Caco-2 (cell line): ENCODE measurements at regions of chr13 and their contacts with region 1.

Region 1: GRCh38 chr13:91154558-91155353 is 192.7 kb upstream of the MIR17HG start:
- DNase-seq: peak; percentile 36 to 50
- H3K4me3 ChIP-seq: peak overlapping the region; percentile 20
- H3K4me3 Mint-ChIP-seq: peak overlapping the region; percentile 72
- H3K27ac Mint-ChIP-seq: peak overlapping the region; percentile 96
- H3K4me1 ChIP-seq: peaks cover 71% of the 10 kb centered on the region
- H3K4me1 Mint-ChIP-seq: peaks cover 49% of the 10 kb centered on the region
- H3K27me3 ChIP-seq: no peaks in the 10 kb centered on the region
- H3K27me3 Mint-ChIP-seq: no peaks in the 10 kb centered on the region
- CTCF ChIP-seq: no peak

Region 2: DNA sequence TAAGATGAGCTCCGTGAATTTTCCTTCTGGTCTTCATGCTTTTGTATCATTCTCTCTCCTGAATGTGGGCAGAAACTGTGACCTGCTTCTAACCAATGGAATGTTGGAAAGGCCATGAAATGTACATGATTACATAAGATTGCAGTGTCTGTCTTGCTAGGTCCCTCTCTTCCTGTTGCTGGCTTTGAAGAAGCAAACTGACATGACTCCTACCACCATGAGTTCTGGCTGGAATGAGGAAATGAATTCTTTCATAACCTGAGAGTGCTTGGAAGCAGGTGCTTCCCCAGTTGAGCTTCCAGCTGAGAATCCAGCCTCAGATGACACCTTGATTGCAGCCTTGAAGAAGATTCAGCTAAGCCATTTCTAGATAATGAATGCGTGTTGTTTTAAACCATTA is 82.3 kb before region 1 on chr13:
- CTCF ChIA-PET with region 1: interaction called, 4 read pairs
- POLR2A ChIA-PET with region 1: interaction called, 3 read pairs
- intact Hi-C with region 1: loop called (anchors 2 kb)
- DNase-seq: peak; percentile 65 to 69
- H3K4me3 ChIP-seq: no peak overlapping the region
- H3K4me3 Mint-ChIP-seq: peak overlapping the region; percentile 24
- H3K27ac Mint-ChIP-seq: peak overlapping the region; percentile 85
- H3K4me1 ChIP-seq: peaks cover 50% of the 10 kb centered on the region
- H3K4me1 Mint-ChIP-seq: peaks cover 45% of the 10 kb centered on the region
- H3K27me3 ChIP-seq: no peaks in the 10 kb centered on the region
- H3K27me3 Mint-ChIP-seq: no peaks in the 10 kb centered on the region
- CTCF ChIP-seq: no peak

Region 3: DNA sequence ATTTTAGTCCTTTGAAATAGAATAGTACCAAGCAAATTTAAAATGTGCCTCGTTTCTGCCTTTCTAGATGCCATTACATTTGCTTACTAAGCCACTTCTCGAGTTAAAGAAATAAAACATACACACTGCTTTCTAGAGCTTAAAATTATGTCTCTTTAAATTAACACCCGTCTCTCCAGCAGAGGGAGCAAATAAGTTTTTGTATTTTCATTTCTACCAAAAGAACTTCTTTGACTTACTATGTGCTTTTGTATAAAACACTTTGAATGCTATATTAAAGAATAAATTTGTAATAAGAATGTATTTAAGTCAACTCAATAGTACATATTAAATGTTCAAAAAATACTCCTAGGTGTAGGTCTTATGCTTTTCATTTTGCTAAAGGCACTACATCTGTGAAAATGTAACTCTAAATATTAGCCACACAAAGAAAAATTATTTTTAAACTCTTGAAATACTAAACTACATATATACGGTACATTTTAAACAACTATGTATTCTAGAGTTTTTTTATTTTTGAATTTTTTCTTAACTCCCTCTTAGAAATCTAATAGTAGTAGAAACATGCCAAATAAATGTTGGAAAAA is 76.6 kb before region 1 on chr13:
- CTCF ChIA-PET with region 1: interaction called, 4 read pairs
- POLR2A ChIA-PET with region 1: interaction called, 3 read pairs
- intact Hi-C with region 1: loop called (anchors 1 kb)
- DNase-seq: peak in 1 of 2 experiments; percentile 15
- H3K4me3 ChIP-seq: no peak overlapping the region
- H3K4me3 Mint-ChIP-seq: no peak overlapping the region
- H3K27ac Mint-ChIP-seq: no peak overlapping the region
- H3K4me1 ChIP-seq: peaks cover 17% of the 10 kb centered on the region
- H3K4me1 Mint-ChIP-seq: peaks cover 23% of the 10 kb centered on the region
- H3K27me3 ChIP-seq: no peaks in the 10 kb centered on the region
- H3K27me3 Mint-ChIP-seq: no peaks in the 10 kb centered on the region
- CTCF ChIP-seq: peak; percentile 51 to 56

Region 4: GRCh38 chr13:91133941-91134802 is 20.6 kb before region 1 on chr13:
- CTCF ChIA-PET with region 1: interaction called, 5 read pairs
- POLR2A ChIA-PET with region 1: no interaction called
- intact Hi-C with region 1: loop called (anchors 1 kb)
- DNase-seq: peak; percentile 69 to 72
- H3K4me3 ChIP-seq: no peak overlapping the region
- H3K4me3 Mint-ChIP-seq: no peak overlapping the region
- H3K27ac Mint-ChIP-seq: peak overlapping the region; percentile 21
- H3K4me1 ChIP-seq: peaks cover 34% of the 10 kb centered on the region
- H3K4me1 Mint-ChIP-seq: peaks cover 16% of the 10 kb centered on the region
- H3K27me3 ChIP-seq: no peaks in the 10 kb centered on the region
- H3K27me3 Mint-ChIP-seq: no peaks in the 10 kb centered on the region
- CTCF ChIP-seq: peak; percentile 90 to 94

Region 5: DNA sequence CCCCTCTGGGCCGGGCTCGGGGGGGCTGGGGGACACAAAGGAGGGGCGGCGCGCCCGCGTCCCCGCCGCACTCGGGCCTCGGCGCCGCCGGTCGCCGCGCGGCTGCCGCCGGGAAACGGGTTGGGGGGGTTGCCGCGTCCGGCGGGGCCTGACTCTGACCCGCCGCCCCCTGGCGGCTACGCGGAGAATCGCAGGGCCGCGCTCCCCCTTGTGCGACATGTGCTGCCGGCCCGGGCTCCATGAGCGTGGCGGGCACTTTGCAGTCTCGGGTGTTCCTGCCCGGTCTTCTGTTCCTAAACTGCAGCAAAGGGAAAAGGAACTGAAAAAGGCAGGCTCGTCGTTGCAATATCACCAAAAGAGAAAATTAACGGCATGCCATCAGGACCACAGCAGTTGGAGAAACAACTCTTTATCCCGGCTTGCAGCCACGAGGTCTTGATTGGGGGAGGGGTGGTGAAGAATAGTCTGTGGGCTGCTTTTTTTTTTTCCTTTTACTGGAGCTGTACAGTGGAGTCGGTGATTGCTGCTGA is 194.2 kb after region 1 on chr13:
- CTCF ChIA-PET with region 1: no interaction called
- POLR2A ChIA-PET with region 1: no interaction called
- intact Hi-C with region 1: loop called (anchors 2 kb)
- DNase-seq: peak; percentile 92 to 97
- H3K4me3 ChIP-seq: peak overlapping the region; percentile 79
- H3K4me3 Mint-ChIP-seq: peak overlapping the region; percentile 95
- H3K27ac Mint-ChIP-seq: peak overlapping the region; percentile 94
- H3K4me1 ChIP-seq: peaks cover 23% of the 10 kb centered on the region
- H3K4me1 Mint-ChIP-seq: no peaks in the 10 kb centered on the region
- H3K27me3 ChIP-seq: no peaks in the 10 kb centered on the region
- H3K27me3 Mint-ChIP-seq: no peaks in the 10 kb centered on the region
- CTCF ChIP-seq: peak; percentile 91 to 92

Region 6: GRCh38 chr13:91652404-91652803 is 497.6 kb after region 1 on chr13:
- CTCF ChIA-PET with region 1: no interaction called
- POLR2A ChIA-PET with region 1: no interaction called
- intact Hi-C with region 1: no loop called
- DNase-seq: no peak
- H3K4me3 ChIP-seq: no peak overlapping the region
- H3K4me3 Mint-ChIP-seq: no peak overlapping the region
- H3K27ac Mint-ChIP-seq: no peak overlapping the region
- H3K4me1 ChIP-seq: peaks cover 7% of the 10 kb centered on the region; the same call in 1 of the 2 replicates
- H3K4me1 Mint-ChIP-seq: no peaks in the 10 kb centered on the region
- H3K27me3 ChIP-seq: no peaks in the 10 kb centered on the region
- H3K27me3 Mint-ChIP-seq: no peaks in the 10 kb centered on the region
- CTCF ChIP-seq: no peak